ENCODE measurements at regions of chr14 and their contacts with region 1.

Region 1: DNA sequence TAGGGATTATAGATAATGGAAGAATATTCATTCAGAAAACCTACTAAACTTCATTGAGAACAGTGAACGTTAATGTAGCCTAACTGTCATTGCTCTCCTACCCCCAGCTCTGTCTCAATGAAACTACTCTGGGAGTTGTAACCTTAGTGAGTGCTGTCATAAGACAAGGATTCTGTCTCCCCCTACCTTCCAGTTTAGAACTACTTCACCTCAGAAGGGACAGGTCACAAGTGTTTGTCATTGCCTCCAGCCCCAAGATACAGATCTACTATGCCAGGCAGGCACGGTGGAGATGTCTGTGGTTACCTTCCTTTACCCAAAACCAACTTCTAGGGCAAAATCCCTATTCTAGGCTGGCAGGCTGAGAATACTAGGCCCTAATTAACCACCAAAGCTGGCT is 833.1 kb upstream of the SEL1L start:
- DNase-seq: no peak
- ATAC-seq: peak; percentile 80
- H3K4me3 Mint-ChIP-seq: no peak overlapping the region
- H3K27ac Mint-ChIP-seq: no peak overlapping the region
- H3K4me1 Mint-ChIP-seq: no peaks in the 10 kb centered on the region
- H3K27me3 Mint-ChIP-seq: no peaks in the 10 kb centered on the region
- CTCF ChIP-seq: no peak

Region 2: GRCh38 chr14:82009076-82009475 is 357.7 kb before region 1 on chr14:
- CTCF ChIA-PET with region 1: interaction called, 10 read pairs
- POLR2A ChIA-PET with region 1: no interaction called
- DNase-seq: no peak
- ATAC-seq: peak; percentile 61; the same call in 1 of the 2 replicates
- H3K4me3 Mint-ChIP-seq: no peak overlapping the region
- H3K27ac Mint-ChIP-seq: no peak overlapping the region
- H3K4me1 Mint-ChIP-seq: no peaks in the 10 kb centered on the region
- H3K27me3 Mint-ChIP-seq: no peaks in the 10 kb centered on the region
- CTCF ChIP-seq: peak; percentile 46

Region 3: GRCh38 chr14:82341261-82341810 is 25.5 kb before region 1 on chr14:
- CTCF ChIA-PET with region 1: no interaction called
- POLR2A ChIA-PET with region 1: no interaction called
- DNase-seq: no peak
- ATAC-seq: no peak
- H3K4me3 Mint-ChIP-seq: no peak overlapping the region
- H3K27ac Mint-ChIP-seq: no peak overlapping the region
- H3K4me1 Mint-ChIP-seq: no peaks in the 10 kb centered on the region
- H3K27me3 Mint-ChIP-seq: no peaks in the 10 kb centered on the region
- CTCF ChIP-seq: no peak

Region 4: GRCh38 chr14:82354126-82354525 is 12.7 kb before region 1 on chr14:
- CTCF ChIA-PET with region 1: no interaction called
- POLR2A ChIA-PET with region 1: no interaction called
- DNase-seq: no peak
- ATAC-seq: no peak
- H3K4me3 Mint-ChIP-seq: no peak overlapping the region
- H3K27ac Mint-ChIP-seq: no peak overlapping the region
- H3K4me1 Mint-ChIP-seq: no peaks in the 10 kb centered on the region
- H3K27me3 Mint-ChIP-seq: no peaks in the 10 kb centered on the region
- CTCF ChIP-seq: no peak

Region 5: GRCh38 chr14:82379291-82379690 is 12.5 kb after region 1 on chr14:
- CTCF ChIA-PET with region 1: no interaction called
- POLR2A ChIA-PET with region 1: no interaction called
- DNase-seq: no peak
- ATAC-seq: no peak
- H3K4me3 Mint-ChIP-seq: no peak overlapping the region
- H3K27ac Mint-ChIP-seq: no peak overlapping the region
- H3K4me1 Mint-ChIP-seq: no peaks in the 10 kb centered on the region
- H3K27me3 Mint-ChIP-seq: no peaks in the 10 kb centered on the region
- CTCF ChIP-seq: no peak

Region 6: GRCh38 chr14:82501554-82501953 is 134.8 kb after region 1 on chr14:
- CTCF ChIA-PET with region 1: no interaction called
- POLR2A ChIA-PET with region 1: no interaction called
- DNase-seq: no peak
- ATAC-seq: no peak
- H3K4me3 Mint-ChIP-seq: no peak overlapping the region
- H3K27ac Mint-ChIP-seq: no peak overlapping the region
- H3K4me1 Mint-ChIP-seq: no peaks in the 10 kb centered on the region
- H3K27me3 Mint-ChIP-seq: no peaks in the 10 kb centered on the region
- CTCF ChIP-seq: no peak

Measured in WTC11 (cell line).